Activated CD8-positive, alpha-beta T cell treated with anti-CD3 and anti-CD28 coated beads for 36 hours (primary cell): ENCODE measurements at regions of chr2 and their contacts with region 1.

Region 1: GRCh38 chr2:15939854-15940660 is at the start of gene MYCN:
- DNase-seq: peak; percentile 67
- ATAC-seq: peak; percentile 57
- H3K4me3 Mint-ChIP-seq: peak within 1 kb of the TSS; percentile 56
- H3K27ac Mint-ChIP-seq: no peak within 1 kb of the TSS
- H3K4me1 Mint-ChIP-seq: peaks cover 21% of the 10 kb centered on the region
- H3K27me3 Mint-ChIP-seq: peaks cover 51% of the 10 kb centered on the region
- CTCF ChIP-seq: no peak
- total RNA-seq, gene MYCN: 0.16 to 0.22 TPM

Region 2: DNA sequence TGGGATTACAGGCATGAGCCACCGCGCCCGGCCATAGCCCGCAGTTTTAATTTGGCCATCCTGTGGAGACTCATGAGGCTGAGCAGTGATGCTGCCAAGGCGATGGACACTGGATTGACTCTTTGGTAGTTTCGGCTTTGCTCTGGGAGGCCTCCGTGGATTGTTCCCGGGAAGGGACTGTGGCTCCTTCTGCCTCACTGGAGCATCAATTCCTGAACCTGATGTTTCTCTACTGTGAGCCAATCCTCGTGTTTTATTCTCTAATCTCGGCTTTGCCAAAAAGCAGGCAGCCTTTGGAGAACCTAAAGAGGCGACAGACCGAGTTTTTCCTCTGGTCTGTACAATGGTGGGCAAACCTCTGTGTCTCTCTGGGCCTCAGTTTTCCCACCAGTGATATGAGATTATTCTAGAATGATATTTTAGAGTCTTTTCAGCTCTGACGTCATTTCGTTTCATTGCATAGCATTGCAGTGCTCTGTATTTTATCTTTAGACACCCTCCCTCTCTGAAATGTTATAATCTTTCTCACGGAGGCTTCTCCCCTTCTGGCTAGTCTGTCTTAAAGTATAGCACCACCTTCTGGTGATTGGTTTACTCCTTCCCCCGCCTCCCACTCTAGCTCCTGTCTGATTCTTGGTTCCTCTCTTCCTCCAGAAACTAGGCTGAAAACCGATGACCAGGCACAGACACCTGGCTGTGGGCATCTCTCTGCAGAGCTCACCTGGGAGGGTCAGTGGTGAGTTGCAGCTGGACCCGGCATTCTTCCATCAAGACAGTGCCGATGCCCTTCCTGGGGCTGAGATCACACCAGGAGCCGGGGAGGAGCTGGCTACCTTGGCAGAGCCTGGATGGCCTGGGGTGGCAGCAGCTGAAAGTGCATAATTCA is 341.6 kb after region 1 on chr2:
- CTCF ChIA-PET with region 1: interaction called, 35 read pairs
- POLR2A ChIA-PET with region 1: no interaction called
- intact Hi-C with region 1: loop called (anchors 5 kb)
- DNase-seq: peak; percentile 14
- ATAC-seq: no peak
- H3K4me3 Mint-ChIP-seq: no peak overlapping the region
- H3K27ac Mint-ChIP-seq: no peak overlapping the region
- H3K4me1 Mint-ChIP-seq: no peaks in the 10 kb centered on the region
- H3K27me3 Mint-ChIP-seq: no peaks in the 10 kb centered on the region
- CTCF ChIP-seq: no peak